ENCODE measurements at regions of chr11 and their contacts with region 1.

Region 1: DNA sequence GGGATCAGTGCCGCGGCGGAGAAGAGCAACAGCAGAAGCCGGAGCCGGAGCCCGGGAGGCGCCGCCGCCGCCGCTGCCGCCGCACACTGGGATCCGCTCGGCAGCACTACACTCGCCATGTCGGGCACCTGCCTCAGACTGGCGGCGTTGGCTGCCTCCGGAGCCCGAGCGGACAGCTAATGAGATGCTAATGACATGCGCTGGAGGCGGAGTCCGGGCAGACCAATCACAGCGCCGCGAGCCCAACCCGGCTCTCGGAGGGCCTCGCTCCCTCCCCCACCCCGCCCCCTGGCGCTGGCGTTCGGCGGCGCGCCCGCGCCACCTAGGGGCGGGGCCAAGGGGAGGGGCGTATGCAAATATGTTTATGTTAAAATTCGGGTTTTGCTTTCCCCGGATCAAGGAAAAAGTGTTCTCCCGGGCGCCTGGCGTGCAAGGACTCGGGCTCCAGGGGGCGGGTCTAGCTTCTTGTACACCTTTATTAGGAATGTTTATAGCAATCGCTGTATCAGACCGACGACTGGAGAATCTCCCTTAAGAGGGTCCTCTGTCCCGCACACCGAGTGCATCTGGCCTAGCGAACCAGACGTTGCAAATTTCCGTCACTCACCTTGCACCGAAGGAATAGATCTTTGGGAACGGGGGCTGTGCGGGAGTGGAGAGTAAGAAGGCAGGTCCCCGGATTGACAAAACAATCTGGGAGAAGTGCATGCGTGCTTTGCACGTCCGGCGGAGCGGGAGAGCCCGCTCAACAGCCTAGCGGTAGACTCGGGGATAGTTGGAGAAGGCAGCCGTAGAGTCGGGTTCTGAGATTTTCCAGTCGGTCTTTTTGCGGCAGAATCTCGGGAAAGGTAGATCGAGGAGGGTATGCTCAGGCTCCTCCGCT is at the start of gene CADM1:
- DNase-seq: peak; percentile 98
- H3K4me3 ChIP-seq: peak within 1 kb of the TSS; percentile 77
- H3K27ac ChIP-seq: peak within 1 kb of the TSS; percentile 58
- H3K4me1 ChIP-seq: peaks cover 30% of the 10 kb centered on the region
- CTCF ChIP-seq: peak; percentile 74
- total RNA-seq, gene CADM1: 49.0 and 59.7 TPM in 2 replicates

Region 2: DNA sequence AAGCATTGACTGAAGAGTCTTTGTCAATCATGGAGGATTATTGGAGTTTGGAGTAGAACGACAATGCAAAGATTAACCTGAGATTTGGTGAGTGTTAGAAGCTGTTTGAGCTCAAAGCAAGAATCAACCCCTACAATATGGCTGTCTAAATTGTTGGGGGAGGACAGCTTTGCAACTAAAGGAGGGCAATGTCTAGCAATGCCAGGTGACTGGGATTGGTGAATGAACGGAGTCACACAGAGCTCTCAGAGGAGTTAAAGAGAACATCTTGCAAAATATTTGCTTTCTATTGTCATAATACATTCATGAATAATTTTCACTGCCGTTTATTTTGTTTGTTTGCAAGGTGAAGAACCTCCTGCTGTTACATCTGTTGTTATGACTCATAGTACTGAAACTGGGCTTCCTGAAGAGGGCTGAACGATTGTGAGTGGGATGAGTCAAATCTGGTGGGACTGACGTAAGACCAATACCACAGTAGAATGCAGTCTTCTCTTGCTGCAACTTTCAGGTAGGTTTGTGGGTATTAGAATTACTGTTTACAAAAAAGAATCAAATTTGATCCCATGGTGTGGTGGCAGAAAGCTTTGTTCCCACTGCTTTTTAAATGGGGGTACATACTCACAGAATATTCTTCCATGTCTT is 282.2 kb before region 1 on chr11:
- CTCF ChIA-PET with region 1: no interaction called
- POLR2A ChIA-PET with region 1: interaction called, 3 read pairs
- intact Hi-C with region 1: loop called (anchors 5 kb)
- DNase-seq: peak; percentile 68
- H3K4me3 ChIP-seq: peak overlapping the region; percentile 53
- H3K27ac ChIP-seq: peak overlapping the region; percentile 89
- H3K4me1 ChIP-seq: peaks cover 81% of the 10 kb centered on the region
- CTCF ChIP-seq: no peak

Region 3: DNA sequence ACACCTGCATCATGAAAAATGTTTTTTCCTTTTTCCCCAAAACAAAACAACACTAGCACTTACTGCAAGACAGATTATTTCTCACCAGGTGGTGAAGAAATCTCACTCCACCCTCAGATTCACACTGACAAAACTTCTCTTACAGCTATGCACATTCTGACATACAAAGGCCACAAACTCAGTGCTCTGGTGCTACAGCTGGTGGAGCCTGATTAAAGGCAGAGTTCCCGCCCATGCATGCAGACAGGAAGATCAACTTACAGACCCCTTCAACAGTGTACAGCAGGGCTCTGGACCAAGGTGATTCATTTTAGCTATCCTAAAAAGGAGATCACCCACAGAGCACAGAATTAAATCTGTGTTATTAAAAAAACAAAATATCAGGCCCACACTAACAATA is 112.9 kb before region 1 on chr11:
- CTCF ChIA-PET with region 1: interaction called, 15 read pairs
- POLR2A ChIA-PET with region 1: interaction called, 10 read pairs
- intact Hi-C with region 1: loop called (anchors 5 kb)
- DNase-seq: peak; percentile 80
- H3K4me3 ChIP-seq: peak overlapping the region; percentile 56
- H3K27ac ChIP-seq: peak overlapping the region; percentile 71
- H3K4me1 ChIP-seq: peaks cover 41% of the 10 kb centered on the region
- CTCF ChIP-seq: no peak

Region 4: DNA sequence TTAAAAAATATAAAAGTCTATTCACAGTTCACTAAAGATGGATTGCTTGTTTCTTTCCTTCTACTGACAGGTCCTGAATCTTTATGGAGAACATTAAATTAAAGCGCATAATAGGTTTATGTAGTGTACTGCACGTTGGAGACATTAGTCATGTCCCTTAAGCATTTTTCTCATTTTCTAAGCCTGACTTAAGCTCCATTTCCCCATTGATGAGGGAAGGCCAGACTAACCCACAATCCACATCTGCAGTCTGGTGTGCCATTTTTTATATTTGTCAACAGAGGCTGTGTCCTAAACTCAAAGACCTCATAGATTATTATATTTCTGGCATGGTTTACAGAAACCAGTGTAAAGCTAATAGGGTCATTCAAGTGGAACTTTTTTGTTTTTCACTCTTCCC is 40.2 kb before region 1 on chr11:
- CTCF ChIA-PET with region 1: no interaction called
- POLR2A ChIA-PET with region 1: interaction called, 11 read pairs
- intact Hi-C with region 1: loop called (anchors 1 kb)
- DNase-seq: no peak
- H3K4me3 ChIP-seq: no peak overlapping the region
- H3K27ac ChIP-seq: no peak overlapping the region
- H3K4me1 ChIP-seq: peaks cover 64% of the 10 kb centered on the region
- CTCF ChIP-seq: no peak

Region 5: DNA sequence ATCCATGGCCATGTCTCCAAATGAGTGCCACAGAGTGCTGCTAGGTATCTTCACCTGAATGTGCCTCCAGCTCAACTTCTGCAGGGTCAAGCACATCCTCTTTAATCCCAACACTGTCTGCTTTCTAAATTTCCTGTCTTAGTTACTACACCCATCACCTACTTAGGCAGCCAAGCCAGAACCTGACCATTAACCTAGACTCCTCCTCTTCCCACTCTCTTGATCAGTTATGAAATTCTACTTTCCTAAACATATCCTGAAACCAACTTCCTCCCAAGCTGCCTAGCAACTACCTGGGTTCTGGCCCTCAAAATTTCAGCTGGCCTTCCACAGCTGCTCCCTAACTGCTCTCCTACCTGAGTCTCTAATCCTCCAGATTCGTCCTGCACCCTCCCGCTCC is 23.0 kb before region 1 on chr11:
- CTCF ChIA-PET with region 1: no interaction called
- POLR2A ChIA-PET with region 1: interaction called, 12 read pairs
- intact Hi-C with region 1: no loop called
- DNase-seq: no peak
- H3K4me3 ChIP-seq: no peak overlapping the region
- H3K27ac ChIP-seq: no peak overlapping the region
- H3K4me1 ChIP-seq: no peaks in the 10 kb centered on the region
- CTCF ChIP-seq: no peak

Region 6: GRCh38 chr11:115930886-115931547 is 426.5 kb after region 1 on chr11:
- CTCF ChIA-PET with region 1: interaction called, 3 read pairs
- POLR2A ChIA-PET with region 1: no interaction called
- intact Hi-C with region 1: loop called (anchors 10 kb)
- DNase-seq: peak; percentile 81
- H3K4me3 ChIP-seq: peak overlapping the region; percentile 45
- H3K27ac ChIP-seq: peak overlapping the region; percentile 51
- H3K4me1 ChIP-seq: peaks cover 56% of the 10 kb centered on the region
- CTCF ChIP-seq: no peak

Measured in OCI-LY7 (cell line).